ENCODE measurements at regions of chr1 and their contacts with region 1.

Region 1: GRCh38 chr1:172719694-172720138 is 60.8 kb downstream of the FASLG start:
- DNase-seq: no peak
- ATAC-seq: peak; percentile 63

Region 2: GRCh38 chr1:172449585-172450534 is 269.9 kb before region 1 on chr1:
- intact Hi-C with region 1: loop called in 1 of 2 experiments (anchors 10 kb)
- DNase-seq: peak; percentile 47 to 54
- ATAC-seq: peak; percentile 79

Measured in left colon (tissue), 2 donors.